Mammary epithelial cell (primary cell): ENCODE measurements at regions of chr11 and their contacts with region 1.

Region 1: DNA sequence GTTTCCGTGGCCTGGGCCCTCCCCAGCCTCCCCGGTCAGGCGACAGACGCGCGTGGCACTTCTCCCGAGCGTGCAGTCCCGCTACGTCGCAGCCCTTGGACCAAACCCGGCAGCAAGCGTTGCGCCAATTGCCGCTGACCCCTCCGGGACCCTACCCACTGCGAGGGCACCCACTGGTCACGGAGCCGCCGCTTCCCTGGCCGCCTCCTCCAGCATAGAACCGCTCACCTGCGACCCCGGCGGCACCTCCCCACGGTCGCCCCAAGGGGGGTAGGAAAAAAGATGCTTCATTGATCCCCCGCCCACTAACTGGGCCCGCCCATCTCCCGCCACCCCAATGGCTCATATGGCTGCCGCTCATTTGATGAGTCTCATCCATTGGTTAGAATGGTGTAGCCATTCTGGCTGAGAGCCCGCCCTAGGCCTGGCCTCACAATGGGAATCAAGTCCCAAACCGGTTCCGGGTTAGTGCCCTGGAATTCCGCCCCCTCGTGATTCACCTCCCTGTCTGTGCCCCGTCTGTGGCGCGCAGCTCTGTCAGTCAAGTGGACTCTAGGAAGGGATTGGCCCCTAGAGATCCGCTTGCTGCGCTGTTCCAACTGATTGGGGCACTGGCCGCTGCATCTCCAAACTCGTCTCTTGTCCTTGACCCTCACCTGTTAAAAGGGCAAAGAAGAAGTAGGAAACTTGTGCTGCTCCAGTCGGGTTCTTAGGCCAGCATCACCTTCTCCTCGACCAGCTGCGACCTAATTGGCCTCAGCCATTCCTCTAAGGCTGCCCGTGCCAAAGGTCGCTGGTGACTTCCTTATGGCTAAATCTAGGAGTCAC is at the start of gene MSANTD4:
- DNase-seq: peak; percentile 98
- H3K4me3 ChIP-seq: peak within 1 kb of the TSS; percentile 68 to 82 (median 76)
- H3K27ac ChIP-seq: peak within 1 kb of the TSS; percentile 9
- H3K4me1 ChIP-seq: peaks cover 17% of the 10 kb centered on the region
- H3K27me3 ChIP-seq: no peaks in the 10 kb centered on the region
- CTCF ChIP-seq: no peak
- total RNA-seq, gene MSANTD4: 20.8 to 41.7 TPM

Region 2: GRCh38 chr11:105432241-105432995 is 589.8 kb before region 1 on chr11:
- CTCF ChIA-PET with region 1: no interaction called
- dilution Hi-C with region 1: no loop called
- in situ Hi-C with region 1: no loop called
- intact Hi-C with region 1: no loop called
- DNase-seq: no peak
- H3K4me3 ChIP-seq: no peak overlapping the region
- H3K27ac ChIP-seq: no peak overlapping the region
- H3K4me1 ChIP-seq: no peaks in the 10 kb centered on the region
- H3K27me3 ChIP-seq: no peaks in the 10 kb centered on the region
- CTCF ChIP-seq: no peak

Region 3: DNA sequence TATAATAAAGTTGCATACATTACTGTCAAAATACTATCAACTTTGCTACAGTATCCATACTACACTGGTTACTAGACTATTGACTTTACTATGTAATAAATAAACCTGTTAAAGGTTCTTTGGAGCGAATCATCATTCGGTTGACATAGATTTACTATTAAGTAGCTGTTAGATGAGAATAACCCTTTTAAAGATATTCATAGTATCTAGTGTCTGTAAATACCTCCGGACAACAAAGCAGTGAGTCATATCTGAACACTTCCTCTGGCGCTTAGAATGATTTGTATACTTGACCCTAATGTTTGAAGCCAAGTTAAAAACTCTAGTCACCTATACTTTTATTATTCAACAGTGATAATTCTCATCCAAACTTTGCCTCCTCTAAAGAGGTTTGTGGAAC is 84.8 kb before region 1 on chr11:
- CTCF ChIA-PET with region 1: no interaction called
- dilution Hi-C with region 1: no loop called
- in situ Hi-C with region 1: no loop called
- intact Hi-C with region 1: no loop called
- DNase-seq: peak; percentile 42
- H3K4me3 ChIP-seq: no peak overlapping the region
- H3K27ac ChIP-seq: peak overlapping the region; percentile 57
- H3K4me1 ChIP-seq: peaks cover 34% of the 10 kb centered on the region
- H3K27me3 ChIP-seq: no peaks in the 10 kb centered on the region
- CTCF ChIP-seq: no peak

Region 4: GRCh38 chr11:106076919-106077608 is 54.9 kb after region 1 on chr11 and contains the start of gene KBTBD3:
- CTCF ChIA-PET with region 1: no interaction called
- dilution Hi-C with region 1: no loop called
- in situ Hi-C with region 1: no loop called
- intact Hi-C with region 1: loop called (anchors 1 kb)
- DNase-seq: peak; percentile 99
- H3K4me3 ChIP-seq: peak within 1 kb of the TSS; percentile 63 to 81 (median 81)
- H3K27ac ChIP-seq: peak within 1 kb of the TSS; percentile 82
- H3K4me1 ChIP-seq: peaks cover 6% of the 10 kb centered on the region
- H3K27me3 ChIP-seq: no peaks in the 10 kb centered on the region
- CTCF ChIP-seq: peak; percentile 20 to 50
- total RNA-seq, gene KBTBD3: 2.2 to 3.3 TPM

Region 5: DNA sequence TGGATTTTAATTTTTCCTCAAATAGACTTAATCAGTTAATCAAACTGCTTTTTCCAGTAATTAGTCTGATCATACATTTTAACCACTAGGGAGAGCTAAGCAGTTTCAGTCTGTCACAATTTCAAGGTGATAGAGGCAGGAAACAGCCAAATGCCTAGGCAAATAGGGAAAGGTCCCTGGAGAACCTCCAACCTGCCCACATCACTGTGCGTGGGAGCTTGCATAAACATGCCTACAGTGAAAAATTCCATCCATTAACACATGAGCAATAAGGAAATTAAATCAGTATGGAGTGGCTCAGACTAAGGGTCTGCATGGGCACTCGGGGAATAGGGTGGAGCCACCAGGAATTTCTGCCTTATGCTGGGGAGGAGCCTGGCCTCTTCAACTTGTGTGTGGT is 129.8 kb after region 1 on chr11:
- CTCF ChIA-PET with region 1: no interaction called
- dilution Hi-C with region 1: no loop called
- in situ Hi-C with region 1: no loop called
- intact Hi-C with region 1: no loop called
- DNase-seq: peak; percentile 82
- H3K4me3 ChIP-seq: peak overlapping the region in 1 of 3 experiments; percentile 6
- H3K27ac ChIP-seq: peak overlapping the region; percentile 86
- H3K4me1 ChIP-seq: peaks cover 23% of the 10 kb centered on the region
- H3K27me3 ChIP-seq: no peaks in the 10 kb centered on the region
- CTCF ChIP-seq: peak; percentile 44 to 52